Adrenal gland (tissue), 19 donors: ENCODE measurements at regions of chr11 and their contacts with region 1.

Region 1: GRCh38 chr11:33329705-33330329 is 72.6 kb downstream of the HIPK3 start:
- DNase-seq: peak; percentile 45 to 79 (median 57)
- H3K4me3 ChIP-seq: no peak overlapping the region
- H3K27ac ChIP-seq: no peak overlapping the region
- H3K4me1 ChIP-seq: peaks cover 0 to 10% of the 10 kb centered on the region in 2 donors
- H3K27me3 ChIP-seq: no peaks in the 10 kb centered on the region
- CTCF ChIP-seq: peak; percentile 54 to 71 (median 68)
- POLR2A ChIP-seq: no peak

Region 2: DNA sequence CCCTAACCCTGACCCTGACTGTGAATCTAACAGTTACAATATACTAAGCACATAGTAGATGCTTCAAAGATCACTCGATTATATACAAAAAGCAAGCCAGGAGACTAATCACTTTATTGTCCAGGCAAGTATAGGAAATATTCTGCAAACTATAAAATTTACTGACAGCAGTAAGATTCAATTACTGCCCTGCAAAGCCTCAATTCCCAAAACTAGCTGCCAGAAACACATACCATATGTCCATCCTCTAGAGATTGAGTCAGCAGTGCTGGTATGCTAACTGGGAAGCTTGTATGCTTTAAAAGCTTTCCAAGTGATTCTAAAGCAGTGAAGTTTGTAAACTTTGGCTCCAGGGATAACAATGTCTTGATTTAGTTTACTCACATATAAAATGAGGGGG is 194.6 kb before region 1 on chr11:
- intact Hi-C with region 1: no loop called
- DNase-seq: no peak
- H3K4me3 ChIP-seq: no peak overlapping the region
- H3K27ac ChIP-seq: no peak overlapping the region
- H3K4me1 ChIP-seq: no peaks in the 10 kb centered on the region
- H3K27me3 ChIP-seq: no peaks in the 10 kb centered on the region
- CTCF ChIP-seq: no peak
- POLR2A ChIP-seq: no peak

Region 3: GRCh38 chr11:33161120-33162005 is 168.5 kb before region 1 on chr11 and contains the start of gene CSTF3:
- intact Hi-C with region 1: loop called (anchors 5 to 10 kb)
- DNase-seq: peak; percentile 100
- H3K4me3 ChIP-seq: peak within 1 kb of the TSS; percentile 57 to 82 (median 60)
- H3K27ac ChIP-seq: peak within 1 kb of the TSS; percentile 28 to 84 (median 56)
- H3K4me1 ChIP-seq: peaks cover 5 to 38% of the 10 kb centered on the region in 2 donors
- H3K27me3 ChIP-seq: no peaks in the 10 kb centered on the region
- CTCF ChIP-seq: peak; percentile 44 to 91 (median 69)
- POLR2A ChIP-seq: peak in 1 of 2 donors; percentile 77
- total RNA-seq, gene CSTF3: 6.9 to 25.9 (median 17.6) TPM

Region 4: GRCh38 chr11:33168709-33169200 is 161.1 kb before region 1 on chr11:
- intact Hi-C with region 1: loop called (anchors 5 to 10 kb)
- DNase-seq: no peak
- H3K4me3 ChIP-seq: no peak overlapping the region
- H3K27ac ChIP-seq: no peak overlapping the region
- H3K4me1 ChIP-seq: no peaks in the 10 kb centered on the region
- H3K27me3 ChIP-seq: no peaks in the 10 kb centered on the region
- CTCF ChIP-seq: no peak
- POLR2A ChIP-seq: no peak